ENCODE measurements at regions of chr2 and their contacts with region 1.

Region 1: GRCh38 chr2:218671654-218672566 is at the starts of genes RNF25 and STK36:
- DNase-seq: peak; percentile 87 to 91 (median 89)
- ATAC-seq: peak; percentile 96 to 99 (median 98)
- H3K4me3 ChIP-seq: peak within 1 kb of the TSS; percentile 75 to 97 (median 90)
- H3K27ac ChIP-seq: peak within 1 kb of the TSS; percentile 14 to 87 (median 82)
- H3K4me1 ChIP-seq: peaks cover 0 to 21% (median 14%) of the 10 kb centered on the region in 12 donors
- H3K27me3 ChIP-seq: no peaks in the 10 kb centered on the region
- CTCF ChIP-seq: no peak
- POLR2A ChIP-seq: peak in 1 of 2 donors; percentile 78
- total RNA-seq, gene RNF25: 9.7 to 23.8 (median 15.0) TPM
- total RNA-seq, gene STK36: 4.7 to 16.2 (median 7.9) TPM

Region 2: GRCh38 chr2:218645126-218645525 is 26.8 kb before region 1 on chr2:
- intact Hi-C with region 1: no loop called
- DNase-seq: no peak
- ATAC-seq: no peak
- H3K4me3 ChIP-seq: no peak overlapping the region
- H3K27ac ChIP-seq: no peak overlapping the region
- H3K4me1 ChIP-seq: peaks cover 0 to 7% (median 0%) of the 10 kb centered on the region in 12 donors
- H3K27me3 ChIP-seq: no peaks in the 10 kb centered on the region
- CTCF ChIP-seq: no peak
- POLR2A ChIP-seq: no peak

Region 3: GRCh38 chr2:218659258-218659987 is 12.5 kb before region 1 on chr2 and contains the starts of genes BCS1L and ZNF142:
- intact Hi-C with region 1: loop called in 1 of 10 experiments (anchors 1 kb)
- DNase-seq: peak; percentile 92 to 95 (median 95)
- ATAC-seq: peak; percentile 89 to 98 (median 96)
- H3K4me3 ChIP-seq: peak within 1 kb of the TSS; percentile 60 to 96 (median 88)
- H3K27ac ChIP-seq: peak within 1 kb of the TSS; percentile 45 to 91 (median 82)
- H3K4me1 ChIP-seq: peaks cover 0 to 45% (median 25%) of the 10 kb centered on the region in 12 donors
- H3K27me3 ChIP-seq: no peaks in the 10 kb centered on the region
- CTCF ChIP-seq: no peak
- POLR2A ChIP-seq: peak in 1 of 2 donors; percentile 81
- total RNA-seq, gene BCS1L: 27.3 to 53.2 (median 43.7) TPM
- total RNA-seq, gene ZNF142: 18.1 to 46.0 (median 21.8) TPM

Region 4: GRCh38 chr2:218806346-218806978 is 134.6 kb after region 1 on chr2:
- intact Hi-C with region 1: no loop called
- DNase-seq: peak; percentile 52 to 82 (median 76)
- ATAC-seq: peak; percentile 76 to 99 (median 96)
- H3K4me3 ChIP-seq: peak overlapping the region in 3 of 12 donors; percentile 2 to 22 (median 7)
- H3K27ac ChIP-seq: peak overlapping the region in 11 of 12 donors; percentile 39 to 89 (median 74)
- H3K4me1 ChIP-seq: peaks cover 0 to 32% (median 7%) of the 10 kb centered on the region in 12 donors
- H3K27me3 ChIP-seq: no peaks in the 10 kb centered on the region
- CTCF ChIP-seq: no peak
- POLR2A ChIP-seq: no peak

Region 5: DNA sequence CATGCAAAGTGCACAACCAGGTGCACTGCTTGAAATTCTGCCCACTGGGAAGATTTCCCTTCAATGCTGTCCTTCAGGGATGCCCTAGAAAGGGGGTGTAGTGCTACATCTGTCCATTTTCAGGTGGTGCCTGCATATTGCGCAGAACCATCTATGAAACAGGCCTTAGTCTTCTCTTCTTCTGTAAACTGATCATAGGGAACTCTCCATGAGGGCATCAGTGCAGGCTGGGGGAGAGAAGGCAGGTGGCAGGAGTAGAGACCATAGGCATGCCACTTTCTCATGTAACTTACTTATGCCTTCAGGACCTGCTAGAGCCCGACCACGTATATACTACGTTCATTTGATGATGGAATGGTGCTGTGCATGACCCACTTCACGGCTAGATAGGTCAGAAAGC is 1867.6 kb after region 1 on chr2:
- intact Hi-C with region 1: no loop called
- DNase-seq: no peak
- ATAC-seq: no peak
- H3K4me3 ChIP-seq: no peak overlapping the region
- H3K27ac ChIP-seq: no peak overlapping the region
- H3K4me1 ChIP-seq: no peaks in the 10 kb centered on the region
- H3K27me3 ChIP-seq: no peaks in the 10 kb centered on the region
- CTCF ChIP-seq: no peak
- POLR2A ChIP-seq: no peak

Measured in heart left ventricle (tissue), 16 donors.